Activated naive CD4-positive, alpha-beta T cell treated with anti-CD3 and anti-CD28 coated beads for 36 hours (primary cell): ENCODE measurements at regions of chr6 and their contacts with region 1.

Region 1: DNA sequence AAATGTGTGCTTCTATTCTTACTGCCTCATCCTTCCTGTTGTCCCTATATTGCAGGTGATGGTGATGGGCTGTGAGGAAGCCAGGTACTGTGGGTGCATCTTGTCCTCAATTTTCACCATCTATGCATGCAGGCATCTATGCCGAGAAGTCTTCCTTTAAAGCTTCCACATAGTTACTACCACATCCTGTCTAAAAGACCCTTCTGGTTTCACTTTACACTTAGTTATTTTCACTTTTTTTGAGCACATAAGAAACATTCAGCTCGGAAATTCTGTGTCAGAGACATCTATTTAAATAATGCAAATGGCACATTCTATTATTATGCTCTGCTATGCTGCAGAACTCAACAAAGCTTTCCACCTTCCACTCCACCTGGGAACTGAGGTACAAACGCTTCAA is 28.2 kb upstream of the FABP7 start:
- DNase-seq: peak; percentile 18
- H3K4me3 Mint-ChIP-seq: no peak overlapping the region
- H3K27ac Mint-ChIP-seq: peak overlapping the region; percentile 33
- H3K4me1 Mint-ChIP-seq: peaks cover 37% of the 10 kb centered on the region
- H3K27me3 Mint-ChIP-seq: no peaks in the 10 kb centered on the region

Region 2: DNA sequence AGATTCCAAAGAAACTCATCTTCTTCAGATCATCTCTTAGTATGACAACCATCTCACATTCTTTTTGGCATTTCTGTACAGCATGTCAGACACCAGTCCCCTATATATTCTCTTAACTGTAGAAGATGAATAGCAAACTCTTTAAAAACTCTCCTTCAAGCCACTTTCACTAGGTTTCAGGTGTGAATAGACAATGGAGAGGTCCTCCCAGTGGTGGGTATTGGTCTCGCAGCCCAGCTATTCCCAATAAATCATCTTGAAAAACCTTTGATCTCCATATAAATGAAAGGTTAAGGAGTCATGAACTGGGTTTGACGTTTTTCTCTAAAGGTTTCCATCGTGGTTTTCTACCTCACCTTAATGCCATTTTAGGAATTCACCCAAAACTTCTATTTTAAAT is 1135.8 kb before region 1 on chr6:
- CTCF ChIA-PET with region 1: no interaction called
- intact Hi-C with region 1: no loop called
- DNase-seq: no peak
- H3K4me3 Mint-ChIP-seq: no peak overlapping the region
- H3K27ac Mint-ChIP-seq: no peak overlapping the region
- H3K4me1 Mint-ChIP-seq: no peaks in the 10 kb centered on the region
- H3K27me3 Mint-ChIP-seq: peaks cover 2% of the 10 kb centered on the region

Region 3: DNA sequence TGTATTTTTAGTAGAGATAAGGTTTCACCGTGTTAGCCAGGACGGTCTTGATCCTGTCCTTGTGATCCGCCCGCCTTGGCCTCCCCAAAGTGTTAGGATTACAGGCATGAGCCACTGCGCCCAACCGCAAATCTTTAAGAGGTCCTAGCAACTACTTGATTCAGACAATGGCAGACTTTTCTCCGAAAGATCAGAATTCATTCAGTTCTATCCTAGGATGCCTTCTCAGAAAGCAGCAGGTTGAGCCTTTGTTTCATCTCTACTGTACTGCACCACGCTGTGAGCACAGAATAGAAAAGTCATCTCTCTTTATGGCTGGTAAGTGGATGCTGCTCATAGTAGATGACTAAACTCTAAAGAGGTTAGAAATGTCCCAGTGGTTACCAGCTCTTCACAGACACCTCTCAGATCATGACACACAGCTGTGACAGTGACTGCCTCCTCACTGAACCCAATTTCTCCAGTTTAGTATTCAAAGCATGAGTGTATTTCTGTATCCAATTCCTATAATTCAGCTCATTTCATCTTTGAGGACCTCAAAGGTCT is 357.9 kb before region 1 on chr6:
- CTCF ChIA-PET with region 1: no interaction called
- intact Hi-C with region 1: loop called (anchors 5 kb)
- DNase-seq: peak; percentile 59
- H3K4me3 Mint-ChIP-seq: no peak overlapping the region
- H3K27ac Mint-ChIP-seq: peak overlapping the region; percentile 67
- H3K4me1 Mint-ChIP-seq: peaks cover 17% of the 10 kb centered on the region
- H3K27me3 Mint-ChIP-seq: no peaks in the 10 kb centered on the region

Region 4: DNA sequence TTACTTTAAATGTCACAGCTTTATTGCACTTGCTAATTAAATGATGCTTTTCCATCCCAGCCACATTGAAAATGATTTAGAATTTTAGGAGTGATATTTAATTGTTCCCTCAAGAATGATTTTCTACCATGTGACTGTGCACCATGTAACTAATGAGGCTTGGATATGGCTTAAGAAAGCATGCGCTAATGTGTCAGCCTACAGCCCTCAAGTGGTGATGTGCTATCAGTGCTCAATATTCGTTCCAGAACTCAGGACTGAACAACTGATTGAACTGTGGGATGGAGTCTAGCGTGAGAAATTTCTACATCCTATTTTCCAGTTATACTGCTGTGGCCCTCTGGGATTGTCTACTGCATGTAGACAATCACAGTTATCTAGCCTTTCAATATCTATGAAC is 69.6 kb before region 1 on chr6:
- CTCF ChIA-PET with region 1: no interaction called
- intact Hi-C with region 1: no loop called
- DNase-seq: no peak
- H3K4me3 Mint-ChIP-seq: no peak overlapping the region
- H3K27ac Mint-ChIP-seq: no peak overlapping the region
- H3K4me1 Mint-ChIP-seq: no peaks in the 10 kb centered on the region
- H3K27me3 Mint-ChIP-seq: no peaks in the 10 kb centered on the region

Region 5: GRCh38 chr6:122789182-122790027 is 38.1 kb after region 1 on chr6 and contains the start of gene SMPDL3A:
- CTCF ChIA-PET with region 1: no interaction called
- intact Hi-C with region 1: loop called (anchors 2 kb)
- DNase-seq: peak; percentile 54
- H3K4me3 Mint-ChIP-seq: peak within 1 kb of the TSS; percentile 85
- H3K27ac Mint-ChIP-seq: no peak within 1 kb of the TSS
- H3K4me1 Mint-ChIP-seq: peaks cover 14% of the 10 kb centered on the region
- H3K27me3 Mint-ChIP-seq: peaks cover 64% of the 10 kb centered on the region
- total RNA-seq, gene SMPDL3A: 0.31 to 0.49 TPM